Panc1 (cell line): ENCODE measurements at regions of chr11 and their contacts with region 1.

Region 1: GRCh38 chr11:34468209-34468841 is 29.6 kb downstream of the CAT start:
- DNase-seq: peak; percentile 15
- ATAC-seq: peak; percentile 63; the same call in 1 of the 2 replicates
- H3K4me3 ChIP-seq: no peak overlapping the region
- H3K27ac ChIP-seq: no peak overlapping the region
- H3K4me1 ChIP-seq: no peaks in the 10 kb centered on the region
- H3K27me3 ChIP-seq: no peaks in the 10 kb centered on the region
- CTCF ChIP-seq: peak; percentile 89

Region 2: GRCh38 chr11:34300026-34300925 is 168.0 kb before region 1 on chr11:
- CTCF ChIA-PET with region 1: no interaction called
- POLR2A ChIA-PET with region 1: interaction called, 12 read pairs
- in situ Hi-C with region 1: no loop called
- intact Hi-C with region 1: no loop called
- DNase-seq: no peak
- ATAC-seq: no peak
- H3K4me3 ChIP-seq: no peak overlapping the region
- H3K27ac ChIP-seq: peak overlapping the region; percentile 55
- H3K4me1 ChIP-seq: peaks cover 56% of the 10 kb centered on the region
- H3K27me3 ChIP-seq: no peaks in the 10 kb centered on the region
- CTCF ChIP-seq: no peak

Region 3: GRCh38 chr11:34366522-34366921 is 101.8 kb before region 1 on chr11:
- CTCF ChIA-PET with region 1: interaction called, 5 read pairs
- POLR2A ChIA-PET with region 1: no interaction called
- in situ Hi-C with region 1: no loop called
- intact Hi-C with region 1: loop called (anchors 2 kb)
- DNase-seq: no peak
- ATAC-seq: no peak
- H3K4me3 ChIP-seq: no peak overlapping the region
- H3K27ac ChIP-seq: 0 out of 2 replicates have a peak overlapping the region, but pooled peaks have one; percentile 40
- H3K4me1 ChIP-seq: peaks cover 14% of the 10 kb centered on the region; the same call in 1 of the 2 replicates
- H3K27me3 ChIP-seq: no peaks in the 10 kb centered on the region
- CTCF ChIP-seq: peak; percentile 76

Region 4: GRCh38 chr11:34585735-34586487 is 117.6 kb after region 1 on chr11:
- CTCF ChIA-PET with region 1: no interaction called
- POLR2A ChIA-PET with region 1: no interaction called
- in situ Hi-C with region 1: no loop called
- intact Hi-C with region 1: no loop called
- DNase-seq: peak; percentile 64
- ATAC-seq: peak; percentile 72
- H3K4me3 ChIP-seq: peak overlapping the region in 1 of 2 experiments; percentile 25; a peak in 2 of 4 replicates
- H3K27ac ChIP-seq: peak overlapping the region; percentile 69
- H3K4me1 ChIP-seq: 0 out of 2 replicates have a peak, but pooled peaks cover 3% of the 10 kb centered on the region
- H3K27me3 ChIP-seq: no peaks in the 10 kb centered on the region; the same call in 1 of the 2 replicates
- CTCF ChIP-seq: peak; percentile 76